ENCODE measurements at regions of chr7 and their contacts with region 1.

Region 1: GRCh38 chr7:128020159-128020558 is 11.1 kb downstream of the LRRC4 start:
- DNase-seq: peak in 1 of 2 experiments; percentile 89
- H3K4me3 ChIP-seq: no peak overlapping the region
- H3K27ac ChIP-seq: no peak overlapping the region
- H3K4me1 ChIP-seq: peaks cover 11 to 27% (median 19%) of the 10 kb centered on the region in 4 experiments
- H3K27me3 ChIP-seq: no peaks in the 10 kb centered on the region
- CTCF ChIP-seq: peak; percentile 78 to 99 (median 84)
- EP300 ChIP-seq: no peak
- POLR2A ChIP-seq: no peak
- RAD21 ChIP-seq: peak; percentile 52 to 72

Region 2: GRCh38 chr7:127955051-127955531 is 65.1 kb before region 1 on chr7:
- CTCF ChIA-PET with region 1: interaction called, 14 read pairs
- POLR2A ChIA-PET with region 1: no interaction called
- DNase-seq: no peak
- H3K4me3 ChIP-seq: no peak overlapping the region
- H3K27ac ChIP-seq: no peak overlapping the region
- H3K4me1 ChIP-seq: peaks cover 0 to 5% (median 1%) of the 10 kb centered on the region in 4 experiments; a peak in 3 of 7 replicates
- H3K27me3 ChIP-seq: no peaks in the 10 kb centered on the region
- CTCF ChIP-seq: no peak
- EP300 ChIP-seq: no peak
- POLR2A ChIP-seq: no peak
- RAD21 ChIP-seq: no peak

Region 3: GRCh38 chr7:127983804-127984332 is 36.3 kb before region 1 on chr7:
- CTCF ChIA-PET with region 1: interaction called, 26 read pairs
- POLR2A ChIA-PET with region 1: interaction called, 4 read pairs
- DNase-seq: no peak
- H3K4me3 ChIP-seq: no peak overlapping the region
- H3K27ac ChIP-seq: no peak overlapping the region
- H3K4me1 ChIP-seq: peaks cover 8 to 20% (median 14%) of the 10 kb centered on the region in 4 experiments; a peak in 5 of 7 replicates
- H3K27me3 ChIP-seq: no peaks in the 10 kb centered on the region
- CTCF ChIP-seq: no peak
- EP300 ChIP-seq: no peak
- POLR2A ChIP-seq: no peak
- RAD21 ChIP-seq: no peak

Region 4: GRCh38 chr7:128000854-128001265 is 19.3 kb before region 1 on chr7:
- CTCF ChIA-PET with region 1: interaction called, 24 read pairs
- POLR2A ChIA-PET with region 1: no interaction called
- DNase-seq: no peak
- H3K4me3 ChIP-seq: no peak overlapping the region
- H3K27ac ChIP-seq: no peak overlapping the region
- H3K4me1 ChIP-seq: peaks cover 0 to 7% (median 5%) of the 10 kb centered on the region in 4 experiments; a peak in 5 of 7 replicates
- H3K27me3 ChIP-seq: no peaks in the 10 kb centered on the region
- CTCF ChIP-seq: no peak
- EP300 ChIP-seq: no peak
- POLR2A ChIP-seq: no peak
- RAD21 ChIP-seq: no peak

Region 5: DNA sequence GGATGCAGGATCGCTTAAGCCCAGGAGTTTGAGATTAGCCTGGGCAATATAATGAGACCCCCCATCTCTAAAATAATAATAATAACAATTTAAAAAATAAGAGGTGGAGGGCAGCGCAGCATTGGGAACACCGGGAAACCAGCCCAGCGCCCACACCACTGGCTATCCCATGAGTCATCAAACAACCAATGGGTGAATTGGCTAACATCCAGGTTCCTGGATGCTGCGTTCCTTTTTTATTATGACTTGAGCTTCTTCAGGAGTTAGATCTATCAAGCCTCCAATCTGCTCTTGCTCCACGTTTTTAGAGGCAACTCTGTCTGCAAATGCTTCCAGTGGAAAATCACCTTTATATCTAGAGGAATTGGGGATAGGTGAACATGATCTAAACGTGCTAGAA is 21.0 kb after region 1 on chr7:
- CTCF ChIA-PET with region 1: interaction called, 59 read pairs
- POLR2A ChIA-PET with region 1: no interaction called
- DNase-seq: no peak
- H3K4me3 ChIP-seq: no peak overlapping the region
- H3K27ac ChIP-seq: no peak overlapping the region
- H3K4me1 ChIP-seq: no peaks in the 10 kb centered on the region
- H3K27me3 ChIP-seq: no peaks in the 10 kb centered on the region
- CTCF ChIP-seq: no peak
- EP300 ChIP-seq: no peak
- POLR2A ChIP-seq: no peak
- RAD21 ChIP-seq: no peak

Region 6: GRCh38 chr7:128059143-128059988 is 39.2 kb after region 1 on chr7:
- CTCF ChIA-PET with region 1: interaction called, 22 read pairs
- POLR2A ChIA-PET with region 1: no interaction called
- DNase-seq: no peak
- H3K4me3 ChIP-seq: no peak overlapping the region
- H3K27ac ChIP-seq: no peak overlapping the region
- H3K4me1 ChIP-seq: peaks cover 0 to 8% (median 2%) of the 10 kb centered on the region in 4 experiments; a peak in 1 of 7 replicates
- H3K27me3 ChIP-seq: no peaks in the 10 kb centered on the region
- CTCF ChIP-seq: no peak
- EP300 ChIP-seq: no peak
- POLR2A ChIP-seq: no peak
- RAD21 ChIP-seq: no peak

Measured in H1 (cell line).